ENCODE measurements at regions of chr18 and their contacts with region 1.

Region 1: DNA sequence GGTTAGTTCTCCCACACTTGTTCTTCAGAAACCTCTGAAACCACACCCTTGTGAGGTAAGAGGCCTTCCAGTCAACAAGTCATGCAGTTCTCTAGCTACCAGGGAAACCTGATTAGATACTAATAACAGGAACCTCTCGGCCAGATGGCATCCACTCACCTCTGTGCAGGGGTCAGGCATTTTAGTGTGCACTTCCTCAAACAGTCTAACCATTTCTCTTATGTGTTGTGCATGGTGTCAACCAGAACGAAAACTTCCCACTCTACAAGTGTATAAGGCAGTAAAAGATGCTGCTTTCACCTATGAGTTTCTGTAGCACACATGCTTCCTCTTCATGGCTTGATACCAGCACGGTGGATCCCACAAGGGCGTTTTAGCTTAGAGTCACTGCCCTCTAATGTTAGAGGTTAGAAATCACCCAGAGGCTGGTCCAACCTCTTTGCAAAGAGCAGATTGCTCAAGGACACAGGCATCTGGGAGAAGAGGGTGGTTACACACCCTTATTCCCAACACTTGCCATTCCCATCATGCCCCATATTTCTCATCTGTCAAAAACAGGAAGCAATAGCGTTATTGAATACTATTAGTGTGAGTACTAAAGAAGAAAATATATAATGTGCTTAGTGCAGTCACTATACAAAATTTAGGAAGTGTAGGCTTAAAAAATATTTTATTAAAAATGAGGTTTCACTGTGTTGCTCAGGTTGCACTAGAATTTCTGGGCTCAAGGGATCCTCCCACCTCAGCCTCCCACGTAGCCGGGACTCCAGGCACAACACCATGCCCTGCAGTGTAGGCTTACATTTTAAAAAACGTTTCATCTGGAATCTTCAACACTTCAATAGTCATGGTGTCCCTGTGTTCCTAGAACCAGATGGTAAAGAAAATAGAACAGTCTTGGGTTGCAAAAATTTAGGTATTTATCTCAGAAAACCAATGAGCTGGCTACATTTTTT is 34.5 kb upstream of the RAB31 start:
- DNase-seq: peak; percentile 93
- H3K4me3 Mint-ChIP-seq: peak overlapping the region; percentile 43
- H3K27ac Mint-ChIP-seq: peak overlapping the region; percentile 94
- H3K4me1 Mint-ChIP-seq: peaks cover 17% of the 10 kb centered on the region
- H3K27me3 Mint-ChIP-seq: no peaks in the 10 kb centered on the region
- CTCF ChIP-seq: peak; percentile 21

Region 2: DNA sequence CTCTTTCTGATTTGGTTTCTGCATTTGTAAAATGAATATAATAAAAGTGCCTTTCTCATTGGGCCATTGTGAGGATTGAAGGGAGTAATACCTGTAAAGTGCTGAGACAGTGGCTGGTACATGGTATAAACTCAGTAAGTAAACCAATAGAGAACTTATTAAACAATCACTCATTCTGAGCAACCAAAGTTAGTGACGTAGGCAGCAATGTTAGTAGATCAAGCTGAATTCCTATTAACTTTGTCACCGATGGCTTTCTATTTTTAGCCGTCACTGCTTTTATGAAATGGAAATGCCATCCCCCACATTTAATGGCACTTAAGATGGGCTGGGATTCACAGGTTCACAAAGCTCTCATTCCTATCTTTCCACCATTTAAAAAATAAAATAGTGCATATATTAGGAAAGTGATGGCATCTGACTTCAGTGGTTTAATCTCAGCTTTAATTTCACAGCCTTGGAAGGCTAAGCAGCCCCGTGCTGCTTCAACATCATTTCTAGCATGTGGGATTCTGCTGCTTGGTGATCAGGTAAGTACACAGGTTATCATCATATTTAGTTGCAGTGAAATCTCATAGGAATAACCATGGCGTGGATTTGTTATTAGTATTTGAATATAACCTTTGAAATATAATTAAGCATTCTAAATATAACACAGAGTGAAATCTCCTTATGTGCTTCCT is 41.6 kb before region 1 on chr18:
- CTCF ChIA-PET with region 1: no interaction called
- POLR2A ChIA-PET with region 1: interaction called, 10 read pairs
- intact Hi-C with region 1: no loop called
- DNase-seq: peak; percentile 49
- H3K4me3 Mint-ChIP-seq: no peak overlapping the region
- H3K27ac Mint-ChIP-seq: no peak overlapping the region
- H3K4me1 Mint-ChIP-seq: peaks cover 6% of the 10 kb centered on the region
- H3K27me3 Mint-ChIP-seq: no peaks in the 10 kb centered on the region
- CTCF ChIP-seq: no peak

Measured in MCF 10A (cell line).